Activated CD4-positive, alpha-beta T cell treated with anti-CD3 and anti-CD28 coated beads, Interleukin-2, amount 10 ng/mL, durations not matched to agents 24 days and 14 days (primary cell): ENCODE measurements at regions of chr7 and their contacts with region 1.

Region 1: GRCh38 chr7:42869131-42870020 is 42.5 kb downstream of the C7orf25 start:
- DNase-seq: peak; percentile 79
- H3K4me3 Mint-ChIP-seq: peak overlapping the region; percentile 62
- H3K27ac Mint-ChIP-seq: peak overlapping the region; percentile 86
- H3K4me1 Mint-ChIP-seq: peaks cover 24% of the 10 kb centered on the region
- H3K27me3 Mint-ChIP-seq: peaks cover 1% of the 10 kb centered on the region

Region 2: DNA sequence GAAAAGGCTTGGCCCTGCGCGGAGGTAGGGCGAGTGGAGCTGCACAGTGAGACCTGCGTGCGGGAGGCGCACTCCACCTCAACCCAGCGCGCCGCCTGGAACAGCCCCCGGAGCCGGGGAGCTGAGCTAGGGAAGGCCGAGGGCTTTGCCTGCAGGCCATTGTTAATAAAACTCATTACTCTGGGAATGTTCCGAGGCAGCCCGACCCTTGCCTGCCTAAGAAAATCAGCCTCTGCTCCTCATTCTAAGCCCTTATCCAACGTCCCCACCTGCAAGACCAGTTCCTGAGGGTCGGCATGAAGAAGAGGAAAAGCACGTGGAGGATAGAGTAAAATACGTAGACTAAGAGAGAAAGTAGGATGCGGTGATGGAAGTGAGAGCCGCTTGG is 12.8 kb before region 1 on chr7:
- intact Hi-C with region 1: loop called (anchors 1 kb)
- DNase-seq: no peak
- H3K4me3 Mint-ChIP-seq: peak overlapping the region; percentile 78
- H3K27ac Mint-ChIP-seq: no peak overlapping the region
- H3K4me1 Mint-ChIP-seq: peaks cover 12% of the 10 kb centered on the region
- H3K27me3 Mint-ChIP-seq: peaks cover 52% of the 10 kb centered on the region

Region 3: DNA sequence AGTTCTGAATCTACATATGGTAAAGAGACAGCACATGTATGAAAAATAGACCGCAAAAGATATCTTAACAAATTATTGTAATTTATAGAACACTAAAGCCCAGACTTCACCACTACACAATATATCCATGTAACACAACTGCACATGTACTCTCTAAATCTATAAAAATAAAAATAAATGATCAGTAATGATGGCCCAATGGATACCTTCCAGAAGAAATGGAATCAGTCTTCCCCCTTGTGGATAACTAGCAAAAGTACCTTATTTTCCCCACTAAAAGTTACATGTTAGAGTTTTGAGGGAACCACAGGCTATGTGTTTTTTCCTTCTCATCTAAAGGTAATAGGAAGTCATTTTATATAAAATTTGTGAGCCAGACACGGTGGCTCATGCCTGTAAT is 16.8 kb after region 1 on chr7:
- intact Hi-C with region 1: loop called (anchors 1 kb)
- DNase-seq: no peak
- H3K4me3 Mint-ChIP-seq: no peak overlapping the region
- H3K27ac Mint-ChIP-seq: no peak overlapping the region
- H3K4me1 Mint-ChIP-seq: peaks cover 22% of the 10 kb centered on the region
- H3K27me3 Mint-ChIP-seq: peaks cover 7% of the 10 kb centered on the region

Region 4: GRCh38 chr7:42911454-42912447 is 42.4 kb after region 1 on chr7 and contains the start of gene C7orf25:
- intact Hi-C with region 1: loop called (anchors 1 kb)
- DNase-seq: peak; percentile 99
- H3K4me3 Mint-ChIP-seq: peak within 1 kb of the TSS; percentile 97
- H3K27ac Mint-ChIP-seq: peak within 1 kb of the TSS; percentile 94
- H3K4me1 Mint-ChIP-seq: peaks cover 65% of the 10 kb centered on the region
- H3K27me3 Mint-ChIP-seq: no peaks in the 10 kb centered on the region
- total RNA-seq, gene C7orf25: 2.1 and 3.9 TPM in 2 replicates

Region 5: GRCh38 chr7:42931834-42932651 is 62.7 kb after region 1 on chr7 and contains the starts of genes MRPL32 and PSMA2:
- intact Hi-C with region 1: loop called (anchors 1 kb)
- DNase-seq: peak; percentile 99
- H3K4me3 Mint-ChIP-seq: peak within 1 kb of the TSS; percentile 97
- H3K27ac Mint-ChIP-seq: peak within 1 kb of the TSS; percentile 99
- H3K4me1 Mint-ChIP-seq: peaks cover 53% of the 10 kb centered on the region
- H3K27me3 Mint-ChIP-seq: no peaks in the 10 kb centered on the region
- total RNA-seq, gene MRPL32: 81.6 and 89.1 TPM in 2 replicates
- total RNA-seq, gene PSMA2: 202 and 209 TPM in 2 replicates